A549 (cell line): ENCODE measurements at regions of chr7 and their contacts with region 1.

Region 1: GRCh38 chr7:992709-993607 is 10.0 kb downstream of the CYP2W1 start:
- DNase-seq: peak; percentile 69 to 97
- ATAC-seq: peak; percentile 91 to 97
- H3K4me3 ChIP-seq: no peak overlapping the region
- H3K27ac ChIP-seq: peak overlapping the region in 1 of 2 experiments; percentile 50; a peak in 1 of 6 replicates
- H3K4me1 ChIP-seq: peaks cover 17% of the 10 kb centered on the region
- CTCF ChIP-seq: peak; percentile 99
- EP300 ChIP-seq: no peak
- POLR2A ChIP-seq: no peak
- RAD21 ChIP-seq: peak; percentile 93 to 97

Region 2: GRCh38 chr7:909358-910329 is 83.3 kb before region 1 on chr7:
- CTCF ChIA-PET with region 1: interaction called, 37 read pairs
- POLR2A ChIA-PET with region 1: no interaction called
- DNase-seq: peak; percentile 42 to 50
- ATAC-seq: peak; percentile 36 to 69
- H3K4me3 ChIP-seq: peak overlapping the region; percentile 42
- H3K27ac ChIP-seq: peak overlapping the region; percentile 54 to 80; a peak in 5 of 6 replicates
- H3K4me1 ChIP-seq: peaks cover 15% of the 10 kb centered on the region
- CTCF ChIP-seq: no peak; the same call in 1 of the 3 replicates
- EP300 ChIP-seq: no peak
- POLR2A ChIP-seq: no peak
- RAD21 ChIP-seq: no peak

Region 3: GRCh38 chr7:1004018-1004852 is 11.3 kb after region 1 on chr7:
- CTCF ChIA-PET with region 1: interaction called, 37 read pairs
- POLR2A ChIA-PET with region 1: no interaction called
- DNase-seq: no peak
- ATAC-seq: peak in 1 of 2 experiments; percentile 16; a peak in 1 of 6 replicates
- H3K4me3 ChIP-seq: no peak overlapping the region
- H3K27ac ChIP-seq: no peak overlapping the region
- H3K4me1 ChIP-seq: no peaks in the 10 kb centered on the region
- CTCF ChIP-seq: no peak
- EP300 ChIP-seq: no peak
- POLR2A ChIP-seq: no peak
- RAD21 ChIP-seq: no peak

Region 4: GRCh38 chr7:1044191-1045068 is 51.5 kb after region 1 on chr7 and contains the start of gene GPR146:
- CTCF ChIA-PET with region 1: interaction called, 487 read pairs
- POLR2A ChIA-PET with region 1: no interaction called
- DNase-seq: peak; percentile 91 to 99
- ATAC-seq: peak; percentile 89 to 92
- H3K4me3 ChIP-seq: peak within 1 kb of the TSS; percentile 60
- H3K27ac ChIP-seq: peak within 1 kb of the TSS; percentile 75 to 85
- H3K4me1 ChIP-seq: peaks cover 18% of the 10 kb centered on the region
- CTCF ChIP-seq: peak; percentile 65
- EP300 ChIP-seq: no peak
- POLR2A ChIP-seq: no peak
- RAD21 ChIP-seq: 0 out of 5 replicates have a peak, but pooled peaks of 1 of the 2 experiments have one; percentile 19
- polyA plus RNA-seq, gene GPR146: 0.50 and 0.87 TPM in 2 replicates

Region 5: DNA sequence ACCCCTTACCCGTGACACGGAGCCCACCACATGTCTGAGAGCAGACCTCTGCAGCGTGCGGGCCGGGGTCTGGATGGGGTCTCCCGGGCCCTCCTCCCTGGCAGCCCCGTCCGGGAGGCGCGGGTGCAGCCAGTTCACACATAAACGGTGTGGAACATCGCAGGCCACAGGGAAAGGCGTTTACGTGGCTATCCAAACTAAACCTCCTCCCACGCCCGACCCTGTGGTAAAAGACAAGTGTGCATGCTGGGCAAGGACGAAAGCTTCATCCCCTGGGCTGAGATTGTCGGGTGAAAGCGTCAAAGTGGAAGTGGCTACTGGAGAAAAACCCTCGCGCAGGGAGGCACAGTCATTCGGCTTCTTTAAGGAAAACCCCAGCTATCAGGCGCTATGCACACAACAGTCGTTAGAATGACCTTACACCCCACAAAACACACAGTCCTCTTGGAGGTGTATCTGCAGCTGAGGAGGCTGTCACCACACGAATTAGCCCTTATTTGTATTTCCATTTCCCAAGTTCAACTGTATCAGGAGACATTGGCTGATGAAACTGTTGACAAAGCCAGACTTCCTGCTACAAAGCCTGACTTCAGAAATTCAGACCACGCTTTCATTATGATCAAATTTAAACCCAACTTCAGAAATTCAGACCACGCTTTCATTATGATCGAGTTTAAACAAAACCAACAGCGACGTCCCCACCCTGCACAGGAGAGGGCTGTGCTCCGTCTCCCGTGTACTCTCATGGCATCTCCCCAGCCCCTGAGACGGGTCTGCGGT is 110.2 kb after region 1 on chr7:
- CTCF ChIA-PET with region 1: interaction called, 14 read pairs
- POLR2A ChIA-PET with region 1: no interaction called
- DNase-seq: no peak
- ATAC-seq: no peak
- H3K4me3 ChIP-seq: no peak overlapping the region
- H3K27ac ChIP-seq: no peak overlapping the region
- H3K4me1 ChIP-seq: no peaks in the 10 kb centered on the region
- CTCF ChIP-seq: no peak
- EP300 ChIP-seq: no peak
- POLR2A ChIP-seq: no peak
- RAD21 ChIP-seq: no peak

Region 6: DNA sequence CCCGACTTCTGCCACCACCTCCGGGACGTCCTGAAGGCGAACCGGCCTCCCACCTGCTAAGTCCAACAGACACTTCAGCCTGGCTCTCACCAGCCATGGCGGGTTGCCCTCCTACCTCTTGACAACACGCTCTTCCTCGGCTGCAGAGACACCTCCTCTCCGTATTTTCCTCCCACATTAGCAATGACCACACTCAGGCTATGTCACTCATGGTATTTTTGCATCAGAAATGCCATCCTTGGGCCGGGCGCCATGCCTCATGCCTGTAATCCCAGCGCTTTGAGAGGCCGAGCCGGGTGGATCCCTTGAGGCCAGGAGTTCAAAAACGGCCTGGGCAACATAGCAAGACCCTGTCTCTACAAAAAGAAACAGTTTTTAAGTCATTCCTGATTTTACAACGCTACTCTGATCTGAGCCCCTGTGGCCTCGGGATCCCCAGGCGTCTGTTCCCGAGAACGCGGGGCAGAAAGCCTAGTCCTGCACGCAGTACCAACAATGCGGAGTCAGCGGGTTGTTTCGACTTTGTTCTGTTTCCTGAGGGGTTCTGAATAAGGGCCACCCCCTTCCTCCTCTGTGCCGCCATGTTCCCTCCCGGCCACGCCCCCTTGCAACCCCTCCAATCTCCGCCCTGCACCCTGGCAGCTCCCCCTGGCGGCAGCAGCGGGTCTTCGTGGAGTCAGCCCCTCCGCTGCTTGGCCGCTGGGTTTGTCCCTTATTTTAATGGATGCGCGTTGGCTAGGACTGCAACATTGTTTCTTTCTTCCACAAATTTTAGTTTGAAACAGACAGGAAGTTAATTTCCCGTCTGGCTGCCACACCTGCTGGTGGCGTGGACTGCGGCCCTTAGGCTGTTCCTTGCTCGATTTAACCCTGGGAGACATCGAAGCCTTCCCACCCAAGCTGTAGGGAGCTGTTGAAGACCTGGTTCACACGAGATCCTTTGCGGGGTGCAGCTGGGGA is 176.7 kb after region 1 on chr7:
- CTCF ChIA-PET with region 1: interaction called, 84 read pairs
- POLR2A ChIA-PET with region 1: no interaction called
- DNase-seq: peak; percentile 85 to 88
- ATAC-seq: peak; percentile 87 to 95
- H3K4me3 ChIP-seq: peak overlapping the region; percentile 73
- H3K27ac ChIP-seq: peak overlapping the region; percentile 93
- H3K4me1 ChIP-seq: 0 out of 3 replicates have a peak, but pooled peaks cover 3% of the 10 kb centered on the region
- CTCF ChIP-seq: peak; percentile 80
- EP300 ChIP-seq: no peak
- POLR2A ChIP-seq: peak; percentile 68
- RAD21 ChIP-seq: peak; percentile 43 to 45; a peak in 4 of 5 replicates

Region 7: GRCh38 chr7:1377103-1377909 is 384.3 kb after region 1 on chr7:
- CTCF ChIA-PET with region 1: no interaction called
- POLR2A ChIA-PET with region 1: no interaction called
- DNase-seq: peak in 1 of 2 experiments; percentile 55
- ATAC-seq: peak; percentile 68 to 70
- H3K4me3 ChIP-seq: no peak overlapping the region
- H3K27ac ChIP-seq: no peak overlapping the region
- H3K4me1 ChIP-seq: no peaks in the 10 kb centered on the region
- CTCF ChIP-seq: 0 out of 3 replicates have a peak, but pooled peaks have one; percentile 14
- EP300 ChIP-seq: no peak
- POLR2A ChIP-seq: no peak
- RAD21 ChIP-seq: peak; percentile 24 to 46; a peak in 3 of 5 replicates